CD8-positive, alpha-beta memory T cell (primary cell): ENCODE measurements at regions of chr3 and their contacts with region 1.

Region 1: DNA sequence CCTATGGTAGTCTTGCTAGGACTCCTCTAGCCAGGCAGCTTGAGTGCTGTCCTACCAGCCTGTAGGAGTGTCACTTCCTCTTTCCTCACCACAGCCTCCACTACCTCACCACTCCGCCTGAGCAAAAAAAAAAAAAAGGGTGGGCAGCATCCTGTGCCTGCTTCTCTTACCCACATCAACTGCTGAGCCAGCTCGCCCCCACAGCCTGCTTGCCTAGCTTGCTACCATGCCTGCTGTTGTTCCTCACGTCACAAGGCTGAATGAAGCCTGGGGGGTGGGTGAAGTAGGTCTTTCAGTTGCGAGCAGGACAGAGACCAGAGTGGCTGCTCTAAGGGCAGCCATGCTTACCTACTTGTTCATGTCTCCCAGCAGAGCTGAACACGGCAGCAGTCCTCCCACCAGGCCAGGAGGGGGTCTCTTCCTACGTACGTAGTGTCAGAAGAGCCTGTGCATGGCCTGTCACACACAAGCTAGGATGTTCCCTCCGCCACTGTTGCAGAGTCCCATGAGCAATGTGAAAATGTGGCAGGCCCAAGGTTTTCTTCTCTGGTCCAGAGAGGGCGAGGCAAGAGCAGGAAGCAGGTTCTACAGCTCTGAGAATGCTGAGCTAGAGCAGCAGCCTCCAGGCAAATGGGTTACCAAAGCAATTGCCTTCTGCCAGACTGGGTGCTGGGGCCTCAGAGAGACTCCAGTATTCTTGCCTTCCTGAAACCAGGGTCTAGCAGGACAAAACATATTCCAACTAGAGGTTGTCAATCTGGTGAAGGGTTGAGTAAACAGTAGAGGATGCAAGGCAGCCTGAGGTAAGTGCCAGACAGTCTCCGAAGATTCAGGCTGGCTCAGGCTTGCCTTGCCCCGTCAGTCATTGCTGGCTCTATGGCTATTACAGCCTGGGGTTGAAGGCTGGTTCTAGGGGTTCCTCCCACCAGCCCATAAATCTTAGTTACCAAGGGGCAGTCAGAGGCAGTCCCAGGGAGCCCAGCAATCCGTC is 8.1 kb downstream of the PPM1M start:
- DNase-seq: peak; percentile 70 to 95 (median 94)
- H3K4me3 ChIP-seq: peak overlapping the region; percentile 57
- H3K4me3 Mint-ChIP-seq: peak overlapping the region; percentile 76 to 92 (median 89)
- H3K27ac ChIP-seq: peak overlapping the region; percentile 77
- H3K27ac Mint-ChIP-seq: peak overlapping the region; percentile 95 to 100 (median 100)
- H3K4me1 ChIP-seq: peaks cover 93% of the 10 kb centered on the region
- H3K4me1 Mint-ChIP-seq: peaks cover 77 to 96% (median 93%) of the 10 kb centered on the region in 3 donors
- H3K27me3 ChIP-seq: no peaks in the 10 kb centered on the region
- H3K27me3 Mint-ChIP-seq: peaks cover 0 to 2% of the 10 kb centered on the region in 2 donors

Region 2: GRCh38 chr3:52181543-52181942 is 72.1 kb before region 1 on chr3:
- CTCF ChIA-PET with region 1: no interaction called
- POLR2A ChIA-PET with region 1: no interaction called
- DNase-seq: no peak
- H3K4me3 ChIP-seq: no peak overlapping the region
- H3K4me3 Mint-ChIP-seq: no peak overlapping the region
- H3K27ac ChIP-seq: no peak overlapping the region
- H3K27ac Mint-ChIP-seq: peak overlapping the region in 4 of 8 donors; percentile 20 to 93 (median 70)
- H3K4me1 ChIP-seq: no peaks in the 10 kb centered on the region
- H3K4me1 Mint-ChIP-seq: peaks cover 7 to 16% (median 8%) of the 10 kb centered on the region in 3 donors
- H3K27me3 ChIP-seq: no peaks in the 10 kb centered on the region
- H3K27me3 Mint-ChIP-seq: no peaks in the 10 kb centered on the region

Region 3: GRCh38 chr3:52210550-52211046 is 43.0 kb before region 1 on chr3:
- CTCF ChIA-PET with region 1: no interaction called
- POLR2A ChIA-PET with region 1: no interaction called
- DNase-seq: no peak
- H3K4me3 ChIP-seq: no peak overlapping the region
- H3K4me3 Mint-ChIP-seq: no peak overlapping the region
- H3K27ac ChIP-seq: no peak overlapping the region
- H3K27ac Mint-ChIP-seq: peak overlapping the region in 1 of 8 donors; percentile 23
- H3K4me1 ChIP-seq: no peaks in the 10 kb centered on the region
- H3K4me1 Mint-ChIP-seq: peaks cover 6 to 13% (median 12%) of the 10 kb centered on the region in 3 donors
- H3K27me3 ChIP-seq: no peaks in the 10 kb centered on the region
- H3K27me3 Mint-ChIP-seq: no peaks in the 10 kb centered on the region

Region 4: GRCh38 chr3:52238761-52239701 is 14.6 kb before region 1 on chr3 and contains the start of gene TWF2:
- CTCF ChIA-PET with region 1: interaction called, 71 read pairs
- POLR2A ChIA-PET with region 1: interaction called, 31 read pairs
- DNase-seq: peak; percentile 82 to 94 (median 88)
- H3K4me3 ChIP-seq: peak within 1 kb of the TSS; percentile 96
- H3K4me3 Mint-ChIP-seq: peak within 1 kb of the TSS; percentile 96 to 99 (median 98)
- H3K27ac ChIP-seq: peak within 1 kb of the TSS; percentile 83
- H3K27ac Mint-ChIP-seq: peak within 1 kb of the TSS; percentile 88 to 99 (median 96)
- H3K4me1 ChIP-seq: peaks cover 76% of the 10 kb centered on the region
- H3K4me1 Mint-ChIP-seq: peaks cover 72 to 88% (median 83%) of the 10 kb centered on the region in 3 donors
- H3K27me3 ChIP-seq: no peaks in the 10 kb centered on the region
- H3K27me3 Mint-ChIP-seq: peaks cover 0 to 2% of the 10 kb centered on the region in 2 donors
- total RNA-seq, gene TWF2: 98.2 to 101 TPM

Region 5: GRCh38 chr3:52270252-52270754 is 16.7 kb after region 1 on chr3:
- CTCF ChIA-PET with region 1: interaction called, 22 read pairs
- POLR2A ChIA-PET with region 1: interaction called, 9 read pairs
- DNase-seq: peak in 1 of 5 donors; percentile 41
- H3K4me3 ChIP-seq: peak overlapping the region; percentile 49
- H3K4me3 Mint-ChIP-seq: peak overlapping the region; percentile 79 to 99 (median 89)
- H3K27ac ChIP-seq: no peak overlapping the region
- H3K27ac Mint-ChIP-seq: peak overlapping the region; percentile 90 to 99 (median 94)
- H3K4me1 ChIP-seq: peaks cover 87% of the 10 kb centered on the region
- H3K4me1 Mint-ChIP-seq: peaks cover 74 to 89% (median 82%) of the 10 kb centered on the region in 3 donors
- H3K27me3 ChIP-seq: no peaks in the 10 kb centered on the region
- H3K27me3 Mint-ChIP-seq: no peaks in the 10 kb centered on the region

Region 6: GRCh38 chr3:52291508-52292181 is 38.0 kb after region 1 on chr3:
- CTCF ChIA-PET with region 1: interaction called, 7 read pairs
- POLR2A ChIA-PET with region 1: interaction called, 20 read pairs
- DNase-seq: peak in 4 of 5 donors; percentile 17 to 72 (median 48)
- H3K4me3 ChIP-seq: no peak overlapping the region
- H3K4me3 Mint-ChIP-seq: peak overlapping the region in 4 of 7 donors; percentile 30 to 78 (median 60)
- H3K27ac ChIP-seq: no peak overlapping the region
- H3K27ac Mint-ChIP-seq: peak overlapping the region in 4 of 8 donors; percentile 27 to 89 (median 46)
- H3K4me1 ChIP-seq: peaks cover 28% of the 10 kb centered on the region
- H3K4me1 Mint-ChIP-seq: peaks cover 31 to 46% (median 35%) of the 10 kb centered on the region in 3 donors
- H3K27me3 ChIP-seq: no peaks in the 10 kb centered on the region
- H3K27me3 Mint-ChIP-seq: peaks cover 0 to 3% of the 10 kb centered on the region in 2 donors